GM12878 (cell line): ENCODE measurements at regions of chr17 and their contacts with region 1.

Region 1: DNA sequence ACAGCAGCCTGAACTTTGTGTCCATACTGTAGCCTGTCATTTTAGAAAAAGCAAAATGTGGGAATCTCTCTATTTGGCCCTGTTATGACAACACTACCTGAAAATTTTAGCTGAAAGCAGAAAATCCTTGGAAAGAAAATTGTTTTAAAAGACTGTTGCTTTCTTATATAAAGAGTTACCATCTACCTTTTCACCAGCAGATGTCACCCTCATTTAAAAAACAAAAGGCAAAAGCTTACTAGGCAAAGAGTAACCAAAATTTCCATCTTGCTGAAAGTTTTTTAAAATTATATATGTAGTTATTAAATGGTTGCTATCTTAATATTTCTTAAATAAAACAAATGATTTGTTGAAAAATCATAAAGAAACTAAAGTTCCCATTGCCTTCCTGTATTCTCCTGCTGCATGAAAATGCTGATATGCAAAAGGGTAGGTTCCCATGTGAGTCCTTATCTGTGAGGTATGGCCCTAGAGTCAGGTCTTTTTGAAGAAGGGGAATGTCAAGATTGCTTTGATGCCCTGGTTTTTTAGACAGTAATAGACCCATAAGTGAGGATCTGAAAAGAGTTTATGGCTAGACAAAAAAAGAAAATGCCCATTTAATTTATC is 61.0 kb downstream of the TNRC6C start:
- DNase-seq: peak; percentile 9
- ATAC-seq: peak; percentile 63
- H3K4me3 ChIP-seq: peak overlapping the region; percentile 25; the same call in 1 of the 2 replicates
- H3K27ac ChIP-seq: peak overlapping the region; percentile 60; the same call in 1 of the 2 replicates
- H3K4me1 ChIP-seq: peaks cover 14% of the 10 kb centered on the region
- H3K27me3 ChIP-seq: no peaks in the 10 kb centered on the region
- CTCF ChIP-seq: peak; percentile 31 to 67 (median 51); a peak in 5 of 6 replicates
- EP300 ChIP-seq: no peak
- POLR2A ChIP-seq: no peak
- RAD21 ChIP-seq: peak; percentile 62

Region 2: GRCh38 chr17:77834170-77835115 is 185.0 kb before region 1 on chr17:
- CTCF ChIA-PET with region 1: interaction called, 3 read pairs
- POLR2A ChIA-PET with region 1: no interaction called
- RAD21 ChIA-PET with region 1: interaction called, 13 read pairs
- SMC1A ChIA-PET with region 1: interaction called, 4 read pairs
- in situ Hi-C with region 1: no loop called
- intact Hi-C with region 1: no loop called
- DNase-seq: peak; percentile 49
- ATAC-seq: peak; percentile 97
- H3K4me3 ChIP-seq: no peak overlapping the region
- H3K27ac ChIP-seq: no peak overlapping the region
- H3K4me1 ChIP-seq: peaks cover 6% of the 10 kb centered on the region
- H3K27me3 ChIP-seq: no peaks in the 10 kb centered on the region; a peak in 1 of 4 replicates
- CTCF ChIP-seq: no peak
- EP300 ChIP-seq: no peak
- POLR2A ChIP-seq: no peak
- RAD21 ChIP-seq: no peak

Region 3: GRCh38 chr17:77924757-77925336 is 94.6 kb before region 1 on chr17:
- CTCF ChIA-PET with region 1: no interaction called
- POLR2A ChIA-PET with region 1: no interaction called
- RAD21 ChIA-PET with region 1: no interaction called
- SMC1A ChIA-PET with region 1: no interaction called
- in situ Hi-C with region 1: no loop called
- intact Hi-C with region 1: no loop called
- DNase-seq: no peak
- ATAC-seq: no peak
- H3K4me3 ChIP-seq: no peak overlapping the region
- H3K27ac ChIP-seq: no peak overlapping the region
- H3K4me1 ChIP-seq: no peaks in the 10 kb centered on the region
- H3K27me3 ChIP-seq: peaks cover 0 to 3% of the 10 kb centered on the region in 2 experiments; a peak in 2 of 4 replicates
- CTCF ChIP-seq: no peak
- EP300 ChIP-seq: no peak
- POLR2A ChIP-seq: no peak
- RAD21 ChIP-seq: no peak

Region 4: DNA sequence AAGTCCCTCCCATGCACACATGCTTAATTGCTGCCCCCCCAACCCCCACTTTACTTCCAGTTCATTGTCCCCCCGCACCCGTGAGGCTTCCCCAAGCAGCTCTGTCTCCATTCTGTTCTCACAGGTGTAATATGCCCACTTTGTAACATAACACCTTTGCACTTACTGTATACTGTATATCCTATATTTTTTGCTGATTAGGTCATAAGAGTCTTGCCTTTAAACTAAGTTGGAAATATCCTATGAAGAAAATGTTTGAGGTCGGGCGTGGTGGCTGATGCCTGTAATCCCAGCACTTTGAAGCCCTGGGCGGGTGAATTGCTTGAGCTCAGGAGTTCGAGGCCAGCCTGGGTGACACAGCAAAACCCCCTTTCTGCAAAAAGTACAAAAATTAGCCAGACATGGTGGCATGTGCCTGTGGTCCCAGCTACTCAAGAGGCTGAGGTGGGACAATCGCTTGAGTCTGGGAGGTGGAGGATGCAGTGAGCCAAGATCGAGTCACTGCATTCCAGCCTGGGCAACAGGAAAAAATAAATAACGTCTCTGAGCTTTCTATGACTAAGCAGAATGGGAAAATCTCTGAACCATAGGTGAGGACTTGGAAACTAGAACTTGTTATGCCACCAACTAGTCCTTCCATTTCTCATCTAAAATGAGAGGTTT is 15.1 kb after region 1 on chr17:
- CTCF ChIA-PET with region 1: interaction called, 80 read pairs
- POLR2A ChIA-PET with region 1: interaction called, 3 read pairs
- RAD21 ChIA-PET with region 1: interaction called, 61 read pairs
- SMC1A ChIA-PET with region 1: interaction called, 79 read pairs
- in situ Hi-C with region 1: no loop called
- intact Hi-C with region 1: no loop called
- DNase-seq: no peak
- ATAC-seq: no peak
- H3K4me3 ChIP-seq: no peak overlapping the region
- H3K27ac ChIP-seq: no peak overlapping the region
- H3K4me1 ChIP-seq: no peaks in the 10 kb centered on the region
- H3K27me3 ChIP-seq: no peaks in the 10 kb centered on the region
- CTCF ChIP-seq: no peak
- EP300 ChIP-seq: no peak
- POLR2A ChIP-seq: no peak
- RAD21 ChIP-seq: no peak

Region 5: DNA sequence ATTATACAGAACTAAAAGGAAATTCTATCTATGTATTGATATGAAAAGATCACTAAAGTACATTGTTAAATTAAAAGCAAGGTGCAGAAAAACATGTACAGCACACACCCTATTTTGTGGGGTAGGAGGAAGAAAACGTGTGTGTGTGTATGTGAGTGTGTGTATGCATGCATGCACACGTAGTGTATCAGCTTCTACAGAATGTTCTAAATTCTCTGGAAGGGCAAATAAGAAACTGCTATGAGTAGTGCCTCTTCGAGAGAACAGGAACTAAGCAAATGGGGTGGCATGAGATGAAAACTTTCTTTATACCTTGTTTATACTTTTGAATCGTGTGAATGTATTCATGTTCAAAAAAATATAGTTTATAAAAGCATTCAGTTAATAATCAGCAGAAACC is 50.2 kb after region 1 on chr17:
- CTCF ChIA-PET with region 1: interaction called, 15 read pairs
- POLR2A ChIA-PET with region 1: no interaction called
- RAD21 ChIA-PET with region 1: interaction called, 5 read pairs
- SMC1A ChIA-PET with region 1: interaction called, 22 read pairs
- in situ Hi-C with region 1: no loop called
- intact Hi-C with region 1: no loop called
- DNase-seq: no peak
- ATAC-seq: no peak
- H3K4me3 ChIP-seq: no peak overlapping the region
- H3K27ac ChIP-seq: no peak overlapping the region
- H3K4me1 ChIP-seq: no peaks in the 10 kb centered on the region
- H3K27me3 ChIP-seq: no peaks in the 10 kb centered on the region
- CTCF ChIP-seq: no peak
- EP300 ChIP-seq: no peak
- POLR2A ChIP-seq: no peak
- RAD21 ChIP-seq: no peak

Region 6: DNA sequence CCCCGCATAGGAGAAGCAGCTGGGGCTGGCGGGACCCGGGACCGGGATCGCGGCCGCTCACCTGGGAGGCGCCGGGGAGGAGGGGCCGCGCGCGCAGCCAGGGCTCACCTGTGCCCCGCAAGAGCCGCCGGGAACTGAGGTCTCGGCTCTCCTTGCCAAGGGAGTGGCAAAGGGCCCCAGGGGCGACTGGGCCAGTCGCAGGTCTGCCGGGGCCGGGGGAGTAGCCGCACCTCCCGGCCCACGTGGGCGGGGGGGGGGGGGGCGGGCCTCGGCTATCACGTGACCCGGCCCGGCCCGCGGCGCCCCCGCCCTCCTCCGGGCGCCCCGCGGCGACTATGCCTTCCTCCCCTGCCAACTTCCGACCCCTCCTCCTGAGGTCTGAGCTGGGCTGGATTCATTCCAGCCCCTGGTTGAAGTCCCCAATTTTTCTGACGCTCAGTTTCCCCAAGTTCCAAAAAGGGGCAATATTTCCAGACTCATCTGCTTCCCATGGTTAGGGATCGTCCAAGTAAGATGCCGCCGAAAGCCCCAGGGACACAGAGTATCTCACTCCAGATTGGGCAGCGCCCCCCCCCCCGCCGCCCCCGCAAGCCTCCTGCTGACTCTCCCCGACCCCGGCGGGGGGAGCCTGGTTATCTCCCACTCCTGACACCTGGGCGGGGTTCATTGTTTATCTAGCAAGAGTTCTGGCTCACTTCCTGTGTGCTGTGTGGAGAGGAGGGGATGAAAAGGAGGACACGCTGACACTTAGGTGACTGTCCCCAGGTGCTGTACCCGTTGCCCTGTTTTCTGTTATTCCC is 109.3 kb after region 1 on chr17 and contains the start of gene TMC6:
- CTCF ChIA-PET with region 1: interaction called, 15 read pairs
- POLR2A ChIA-PET with region 1: interaction called, 5 read pairs
- RAD21 ChIA-PET with region 1: interaction called, 17 read pairs
- SMC1A ChIA-PET with region 1: interaction called, 4 read pairs
- in situ Hi-C with region 1: no loop called
- intact Hi-C with region 1: no loop called
- DNase-seq: no peak
- ATAC-seq: peak; percentile 13
- H3K4me3 ChIP-seq: peak within 1 kb of the TSS; percentile 94
- H3K27ac ChIP-seq: peak within 1 kb of the TSS; percentile 95
- H3K4me1 ChIP-seq: peaks cover 61% of the 10 kb centered on the region
- H3K27me3 ChIP-seq: no peaks in the 10 kb centered on the region
- CTCF ChIP-seq: no peak
- EP300 ChIP-seq: peak in 1 of 2 experiments; percentile 9; a peak in 1 of 4 replicates
- POLR2A ChIP-seq: peak; percentile 89
- RAD21 ChIP-seq: no peak
- polyA plus RNA-seq, gene TMC6: 1.9 to 11.5 TPM

Region 7: DNA sequence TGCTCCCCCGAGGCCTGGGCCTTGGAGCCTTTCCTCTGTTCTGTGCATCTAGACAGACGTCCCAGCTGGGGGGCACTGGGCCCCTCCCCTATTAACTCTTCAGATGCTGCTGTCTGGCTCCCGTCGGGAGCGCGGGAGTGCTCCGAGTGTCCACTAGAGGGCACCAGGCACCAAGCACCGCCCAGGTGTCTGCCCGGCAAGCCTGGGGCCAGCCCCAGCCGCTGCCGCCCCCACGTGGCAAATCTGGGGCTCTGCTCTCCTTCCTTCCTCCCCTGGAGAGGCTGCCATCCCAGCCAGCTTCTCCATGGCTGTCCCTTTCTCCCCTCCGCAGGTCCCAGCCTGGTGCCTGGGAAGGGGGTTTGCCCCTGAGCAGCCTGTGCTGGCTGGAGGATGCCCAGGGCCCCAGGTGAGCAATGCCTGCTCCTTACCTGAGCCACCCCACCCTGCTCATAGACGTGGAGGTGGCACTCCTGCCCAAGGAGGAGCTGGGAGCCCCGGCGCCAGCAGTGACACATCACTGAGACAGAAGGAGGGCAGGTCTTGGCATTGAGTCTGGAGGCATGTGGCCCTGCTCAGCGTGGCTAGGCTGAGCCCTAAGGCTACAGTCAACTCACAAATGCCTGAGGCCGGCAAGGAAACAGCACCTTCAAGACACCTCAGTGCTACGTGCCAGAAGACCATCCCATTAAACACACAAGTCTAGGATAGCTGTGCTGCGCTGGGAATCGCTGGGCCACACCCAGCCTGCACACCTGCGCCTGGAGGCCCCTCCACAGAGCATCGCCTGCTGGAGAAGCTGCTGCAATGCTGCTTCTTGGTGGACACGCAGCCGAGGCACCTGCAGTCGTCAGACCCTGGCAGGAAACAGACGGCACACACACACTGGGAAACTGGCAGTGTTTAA is 231.7 kb after region 1 on chr17:
- CTCF ChIA-PET with region 1: interaction called, 66 read pairs
- POLR2A ChIA-PET with region 1: interaction called, 5 read pairs
- RAD21 ChIA-PET with region 1: interaction called, 40 read pairs
- SMC1A ChIA-PET with region 1: interaction called, 23 read pairs
- in situ Hi-C with region 1: no loop called
- intact Hi-C with region 1: loop called (anchors 2 kb)
- DNase-seq: no peak
- ATAC-seq: peak; percentile 87
- H3K4me3 ChIP-seq: no peak overlapping the region
- H3K27ac ChIP-seq: no peak overlapping the region
- H3K4me1 ChIP-seq: peaks cover 29% of the 10 kb centered on the region
- H3K27me3 ChIP-seq: no peaks in the 10 kb centered on the region; a peak in 1 of 4 replicates
- CTCF ChIP-seq: peak; percentile 99 to 100 (median 99)
- EP300 ChIP-seq: no peak
- POLR2A ChIP-seq: no peak
- RAD21 ChIP-seq: peak; percentile 83

Region 8: DNA sequence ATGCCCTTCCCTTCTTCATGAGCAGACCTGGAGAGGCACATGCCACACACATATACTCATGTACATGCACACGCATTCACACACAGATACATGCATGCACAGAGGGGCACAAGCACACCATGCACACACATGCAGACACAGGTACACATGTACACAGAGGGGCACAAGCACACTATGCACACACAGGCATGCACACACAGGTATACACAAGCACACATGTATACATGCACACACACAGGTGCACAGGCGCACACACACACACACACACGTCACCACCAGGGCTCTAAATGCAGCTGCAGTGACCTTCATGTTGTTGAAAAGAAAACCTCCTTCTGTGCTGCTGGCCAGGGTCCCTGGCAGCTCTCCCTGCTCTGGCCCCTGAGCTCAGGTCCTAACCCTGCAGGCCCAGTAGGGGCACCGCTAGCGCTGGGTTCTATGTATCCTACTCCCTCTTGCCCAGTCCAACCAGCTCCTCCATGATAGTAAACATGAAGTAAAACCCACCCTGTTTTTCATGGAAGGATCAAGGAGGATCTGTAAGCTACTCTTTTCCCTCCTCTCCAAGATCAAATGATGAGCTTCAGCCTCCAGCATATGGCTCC is 1418.5 kb after region 1 on chr17:
- CTCF ChIA-PET with region 1: no interaction called
- POLR2A ChIA-PET with region 1: no interaction called
- RAD21 ChIA-PET with region 1: no interaction called
- SMC1A ChIA-PET with region 1: no interaction called
- in situ Hi-C with region 1: no loop called
- intact Hi-C with region 1: no loop called
- DNase-seq: no peak
- ATAC-seq: no peak
- H3K4me3 ChIP-seq: no peak overlapping the region
- H3K27ac ChIP-seq: no peak overlapping the region
- H3K4me1 ChIP-seq: no peaks in the 10 kb centered on the region
- H3K27me3 ChIP-seq: peaks cover 0 to 1% of the 10 kb centered on the region in 2 experiments; a peak in 3 of 4 replicates
- CTCF ChIP-seq: no peak
- EP300 ChIP-seq: no peak
- POLR2A ChIP-seq: no peak
- RAD21 ChIP-seq: no peak